ENCODE measurements at regions of chr3 and their contacts with region 1.

Region 1: DNA sequence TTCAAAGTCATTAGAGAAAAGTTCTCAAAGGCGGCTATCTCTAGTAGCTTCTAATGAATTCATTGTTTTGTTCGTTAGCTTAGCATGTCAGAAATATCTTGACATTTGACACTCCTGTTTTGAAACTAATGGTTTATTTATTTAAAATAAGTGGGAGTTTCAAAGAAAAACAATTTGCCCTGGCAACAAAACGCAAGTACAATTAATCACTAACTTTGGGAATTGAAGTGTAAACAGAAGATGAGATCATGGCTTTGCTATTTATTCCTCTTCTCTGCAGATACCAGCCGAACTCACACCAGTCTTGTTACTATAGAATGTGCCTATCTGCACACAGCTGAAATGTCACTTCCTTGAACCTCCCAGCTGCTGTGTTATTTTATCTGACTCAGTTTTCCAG is 27.5 kb downstream of the MASP1 start:
- DNase-seq: no peak
- H3K4me3 ChIP-seq: no peak overlapping the region
- H3K27ac ChIP-seq: no peak overlapping the region
- H3K4me1 ChIP-seq: no peaks in the 10 kb centered on the region
- H3K27me3 ChIP-seq: no peaks in the 10 kb centered on the region
- CTCF ChIP-seq: no peak
- EP300 ChIP-seq: no peak
- POLR2A ChIP-seq: no peak
- RAD21 ChIP-seq: no peak

Region 2: GRCh38 chr3:187274977-187275338 is 10.9 kb after region 1 on chr3:
- CTCF ChIA-PET with region 1: interaction called, 49 read pairs
- POLR2A ChIA-PET with region 1: interaction called, 5 read pairs
- DNase-seq: peak; percentile 59 to 61
- H3K4me3 ChIP-seq: peak overlapping the region in 2 of 4 experiments; percentile 24 to 31; a peak in 4 of 8 replicates
- H3K27ac ChIP-seq: peak overlapping the region; percentile 51; the same call in 1 of the 2 replicates
- H3K4me1 ChIP-seq: peaks cover 7 to 20% (median 15%) of the 10 kb centered on the region in 4 experiments
- H3K27me3 ChIP-seq: no peaks in the 10 kb centered on the region
- CTCF ChIP-seq: no peak
- EP300 ChIP-seq: no peak
- POLR2A ChIP-seq: peak in 1 of 2 experiments; percentile 38; a peak in 1 of 3 replicates
- RAD21 ChIP-seq: no peak

Region 3: DNA sequence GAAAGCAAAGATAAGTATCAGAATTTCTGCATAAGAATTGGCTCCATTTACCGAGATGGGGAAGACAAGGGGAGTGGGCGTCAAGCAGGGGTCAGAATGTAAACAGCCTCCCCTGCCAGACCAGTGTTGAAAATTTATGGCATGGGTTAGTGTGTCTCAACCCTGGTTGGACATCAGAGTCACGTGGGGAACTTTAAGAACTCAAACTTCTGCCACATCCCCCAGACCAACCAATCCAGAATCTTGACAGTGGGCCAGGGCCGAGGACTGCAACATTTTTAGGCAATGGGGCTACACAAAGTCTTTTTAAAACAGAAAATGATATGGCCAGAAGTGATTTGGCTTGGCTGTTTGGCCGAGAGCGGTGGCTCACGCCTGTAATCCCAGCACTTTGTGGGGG is 41.9 kb after region 1 on chr3:
- CTCF ChIA-PET with region 1: no interaction called
- POLR2A ChIA-PET with region 1: no interaction called
- DNase-seq: no peak
- H3K4me3 ChIP-seq: no peak overlapping the region
- H3K27ac ChIP-seq: no peak overlapping the region
- H3K4me1 ChIP-seq: no peaks in the 10 kb centered on the region; a peak in 1 of 7 replicates
- H3K27me3 ChIP-seq: no peaks in the 10 kb centered on the region
- CTCF ChIP-seq: no peak
- EP300 ChIP-seq: no peak
- POLR2A ChIP-seq: no peak
- RAD21 ChIP-seq: no peak

Measured in H1 (cell line).